BJ (cell line): ENCODE measurements at regions of chr20 and their contacts with region 1.

Region 1: DNA sequence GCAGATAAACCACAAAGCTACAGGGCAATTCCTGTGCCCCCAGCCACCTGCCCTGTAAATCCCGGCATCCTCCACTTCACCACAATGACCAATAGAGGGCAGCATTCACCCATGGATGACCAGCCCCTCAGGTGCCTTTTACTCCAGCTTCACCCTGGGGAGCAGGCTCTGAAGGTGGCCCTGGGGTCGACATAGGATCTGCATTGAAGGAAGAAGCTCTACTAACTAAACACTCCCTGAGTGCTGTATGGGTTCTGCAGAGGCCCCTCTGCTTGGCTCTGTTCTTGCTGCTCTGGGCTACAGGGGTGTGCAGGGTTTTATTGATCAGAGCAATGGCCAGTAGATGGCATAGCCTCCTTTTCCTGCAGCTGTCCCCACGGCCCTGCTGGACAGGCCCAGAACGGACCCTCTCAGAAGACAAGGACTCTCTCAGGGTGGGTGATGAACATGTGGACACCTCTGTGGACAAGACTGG is 20.3 kb downstream of the CST4 start:
- DNase-seq: no peak
- H3K4me3 ChIP-seq: no peak overlapping the region
- H3K27me3 ChIP-seq: peaks cover 2% of the 10 kb centered on the region; the same call in 1 of the 2 replicates
- CTCF ChIP-seq: peak; percentile 77

Region 2: GRCh38 chr20:23655491-23656211 is 12.9 kb before region 1 on chr20:
- CTCF ChIA-PET with region 1: interaction called, 19 read pairs
- POLR2A ChIA-PET with region 1: no interaction called
- DNase-seq: no peak
- H3K4me3 ChIP-seq: no peak overlapping the region
- H3K27me3 ChIP-seq: no peaks in the 10 kb centered on the region
- CTCF ChIP-seq: no peak

Region 3: GRCh38 chr20:23680146-23680545 is 11.6 kb after region 1 on chr20:
- CTCF ChIA-PET with region 1: interaction called, 10 read pairs
- POLR2A ChIA-PET with region 1: no interaction called
- DNase-seq: no peak
- H3K4me3 ChIP-seq: no peak overlapping the region
- H3K27me3 ChIP-seq: no peaks in the 10 kb centered on the region
- CTCF ChIP-seq: no peak